ENCODE measurements at regions of chr7 and their contacts with region 1.

Region 1: GRCh38 chr7:139016931-139017511 is 18.8 kb downstream of the ZC3HAV1L start:
- DNase-seq: peak; percentile 78
- ATAC-seq: peak; percentile 98
- H3K4me3 Mint-ChIP-seq: no peak overlapping the region
- H3K27ac Mint-ChIP-seq: no peak overlapping the region
- H3K4me1 Mint-ChIP-seq: peaks cover 6% of the 10 kb centered on the region
- H3K27me3 Mint-ChIP-seq: peaks cover 4% of the 10 kb centered on the region

Region 2: DNA sequence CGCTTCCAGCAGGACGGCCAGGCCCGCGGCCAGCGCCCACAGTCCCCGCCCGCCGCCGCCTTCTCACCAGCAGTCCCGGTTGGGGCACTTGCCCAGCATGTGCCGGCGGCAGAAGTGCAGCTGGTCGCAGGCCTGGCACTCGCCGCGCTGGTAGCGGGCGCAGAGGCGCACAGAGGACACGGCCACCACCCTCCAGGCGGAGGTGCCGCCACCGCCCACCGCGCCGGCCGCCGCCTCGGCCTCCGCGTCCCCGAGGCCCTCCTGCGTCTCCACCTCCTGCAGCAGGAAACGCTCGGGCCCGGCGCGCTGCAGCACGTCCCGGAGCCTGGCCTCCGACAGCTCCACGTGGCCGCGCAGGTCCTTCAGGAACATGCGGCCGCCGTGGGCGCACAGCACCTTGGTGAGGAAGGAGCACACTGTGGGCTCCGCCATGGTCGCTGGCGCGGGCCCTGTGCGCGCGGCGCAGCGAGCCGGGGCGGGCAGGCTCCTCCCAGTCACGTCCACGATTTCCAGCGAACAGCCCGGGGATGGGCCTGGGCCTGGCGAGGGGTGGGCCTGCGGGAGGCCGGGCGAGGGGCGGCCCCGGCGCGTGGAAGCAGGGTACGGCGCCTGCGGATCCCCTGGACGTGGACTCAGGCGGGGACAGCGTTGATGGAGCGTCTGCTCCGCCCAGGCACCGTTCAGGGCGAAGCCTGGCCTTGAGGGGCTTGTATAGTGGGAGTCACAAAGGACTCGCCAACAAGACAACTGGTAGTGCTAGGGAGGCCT is 18.7 kb after region 1 on chr7 and contains the start of gene ZC3HAV1L:
- CTCF ChIA-PET with region 1: interaction called, 11 read pairs
- POLR2A ChIA-PET with region 1: no interaction called
- intact Hi-C with region 1: no loop called
- DNase-seq: peak; percentile 83
- ATAC-seq: peak; percentile 96
- H3K4me3 Mint-ChIP-seq: peak within 1 kb of the TSS; percentile 82
- H3K27ac Mint-ChIP-seq: peak within 1 kb of the TSS; percentile 88
- H3K4me1 Mint-ChIP-seq: peaks cover 22% of the 10 kb centered on the region
- H3K27me3 Mint-ChIP-seq: no peaks in the 10 kb centered on the region
- total RNA-seq, gene ZC3HAV1L: 19.8 to 23.2 TPM

Region 3: DNA sequence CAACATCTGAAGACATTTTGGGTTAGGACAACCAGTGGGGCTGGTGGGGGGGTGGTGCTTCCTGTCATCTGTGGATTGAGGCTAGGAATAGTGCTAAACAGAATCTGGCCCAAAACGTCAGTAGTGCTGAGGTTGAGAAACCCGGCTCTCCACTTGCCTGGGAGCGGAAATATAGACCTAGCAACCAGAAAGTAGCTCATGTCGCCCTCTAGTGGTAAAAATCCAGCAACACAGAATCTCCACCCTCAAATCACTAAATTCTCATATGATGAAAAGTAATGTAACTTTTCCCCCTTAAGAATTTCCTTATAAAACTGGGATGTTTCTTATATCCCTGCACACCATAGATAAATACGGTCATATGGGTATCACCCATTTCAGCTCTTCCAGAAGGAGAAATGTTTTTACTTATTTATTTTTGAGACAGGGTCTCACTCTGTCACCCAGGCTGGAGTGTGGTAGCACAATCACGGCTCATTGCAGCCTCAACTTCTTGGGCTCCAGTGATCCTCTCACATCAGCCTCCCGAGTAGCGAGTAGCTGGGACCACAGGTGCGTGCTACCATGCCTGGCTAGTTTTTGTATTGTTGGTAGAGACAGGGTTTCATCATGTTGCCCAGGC is 58.1 kb after region 1 on chr7:
- CTCF ChIA-PET with region 1: interaction called, 41 read pairs
- POLR2A ChIA-PET with region 1: no interaction called
- intact Hi-C with region 1: loop called (anchors 1 kb)
- DNase-seq: peak; percentile 77
- ATAC-seq: peak; percentile 79
- H3K4me3 Mint-ChIP-seq: peak overlapping the region; percentile 24
- H3K27ac Mint-ChIP-seq: peak overlapping the region; percentile 76
- H3K4me1 Mint-ChIP-seq: peaks cover 70% of the 10 kb centered on the region
- H3K27me3 Mint-ChIP-seq: no peaks in the 10 kb centered on the region

Region 4: GRCh38 chr7:139124084-139124914 is 107.3 kb after region 1 on chr7:
- CTCF ChIA-PET with region 1: interaction called, 5 read pairs
- POLR2A ChIA-PET with region 1: no interaction called
- intact Hi-C with region 1: loop called in 1 of 2 experiments (anchors 1 kb)
- DNase-seq: peak; percentile 51
- ATAC-seq: peak; percentile 85
- H3K4me3 Mint-ChIP-seq: no peak overlapping the region
- H3K27ac Mint-ChIP-seq: peak overlapping the region; percentile 66
- H3K4me1 Mint-ChIP-seq: peaks cover 37% of the 10 kb centered on the region
- H3K27me3 Mint-ChIP-seq: no peaks in the 10 kb centered on the region